Left ventricle myocardium inferior (tissue), 1 donor: ENCODE measurements at regions of chr11 and their contacts with region 1.

Region 1: GRCh38 chr11:108697872-108698473 is 33.1 kb downstream of the DDX10 start:
- DNase-seq: no peak
- H3K4me3 ChIP-seq: no peak overlapping the region
- H3K27ac ChIP-seq: no peak overlapping the region
- H3K4me1 ChIP-seq: no peaks in the 10 kb centered on the region
- H3K27me3 ChIP-seq: no peaks in the 10 kb centered on the region
- CTCF ChIP-seq: peak; percentile 90

Region 2: DNA sequence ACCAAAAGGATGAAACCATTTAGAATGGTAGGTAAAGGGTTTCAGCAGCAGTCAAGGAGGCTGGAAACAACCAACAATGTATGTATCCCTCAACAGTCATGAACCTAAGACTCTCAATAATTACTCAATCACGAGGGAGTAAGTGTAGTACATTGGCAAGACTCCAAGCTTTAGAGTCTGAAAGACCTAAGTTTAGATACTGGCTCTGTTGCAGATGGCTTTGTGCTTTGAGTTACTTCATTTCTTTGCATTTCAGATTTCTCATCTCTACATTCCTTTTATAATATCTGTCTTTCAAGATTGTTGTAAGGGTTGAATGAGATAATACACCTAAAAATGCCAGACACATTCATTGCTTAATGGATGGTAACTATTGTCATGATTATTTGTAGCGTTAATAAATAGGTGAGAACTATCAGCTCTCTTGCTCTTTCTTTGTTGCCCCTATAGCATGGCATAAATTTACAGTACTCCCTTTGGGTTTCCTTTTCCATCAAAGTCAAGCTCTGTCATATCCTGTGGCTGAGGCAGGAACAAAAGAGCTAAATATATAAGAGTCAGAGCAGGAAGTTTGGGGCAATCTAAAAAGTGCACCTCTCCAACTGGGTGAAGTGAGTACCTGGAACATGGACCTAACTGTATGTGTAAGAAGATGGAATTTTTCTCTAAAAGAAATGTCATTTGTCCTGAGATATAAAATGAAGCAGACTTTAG is 1167.0 kb after region 1 on chr11:
- intact Hi-C with region 1: loop called (anchors 5 kb)
- DNase-seq: no peak
- H3K4me3 ChIP-seq: no peak overlapping the region
- H3K27ac ChIP-seq: no peak overlapping the region
- H3K4me1 ChIP-seq: peaks cover 9% of the 10 kb centered on the region
- H3K27me3 ChIP-seq: no peaks in the 10 kb centered on the region
- CTCF ChIP-seq: no peak